Natural killer cell (primary cell): ENCODE measurements at regions of chr1 and their contacts with region 1.

Region 1: DNA sequence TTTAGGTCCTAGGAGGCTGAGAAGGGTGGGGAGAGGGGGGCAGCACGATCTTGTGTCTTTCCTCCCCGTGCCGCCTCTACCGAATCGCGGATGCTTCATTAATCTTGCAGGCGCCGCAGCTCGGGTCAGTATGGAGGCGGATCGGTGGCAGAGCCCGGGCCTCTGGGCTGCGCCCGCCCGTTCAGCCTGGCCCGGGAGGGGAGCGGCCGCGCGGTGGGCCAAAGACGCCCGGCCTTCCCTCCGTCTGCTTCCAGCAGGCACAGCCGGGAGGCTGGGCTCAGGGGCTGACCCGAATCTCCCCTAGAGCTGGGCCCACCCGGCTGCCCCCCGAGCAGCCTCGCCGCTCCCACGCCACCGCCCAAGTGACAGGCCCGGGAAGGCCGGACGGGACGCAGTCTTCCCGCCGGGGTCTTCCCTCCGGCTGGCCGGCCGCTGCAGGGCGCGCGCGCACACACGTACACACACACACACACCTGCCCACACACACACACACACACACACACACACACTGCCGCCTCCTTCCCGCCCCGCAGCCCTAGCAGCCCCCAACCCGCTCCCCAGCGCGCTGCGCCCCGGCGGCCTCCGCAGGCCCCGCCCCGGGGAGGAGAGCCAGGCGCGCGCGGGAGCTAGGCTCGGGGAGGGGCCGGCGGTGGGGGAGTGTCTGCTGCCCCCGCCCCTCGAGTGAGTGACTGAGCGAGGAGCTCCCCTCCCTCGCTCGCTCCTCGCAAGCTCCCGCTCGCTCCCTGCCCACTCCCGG is at the start of gene C1orf21:
- DNase-seq: peak; percentile 81 to 90
- ATAC-seq: peak; percentile 77 to 88 (median 79)
- H3K4me3 ChIP-seq: peak within 1 kb of the TSS; percentile 84
- H3K4me3 Mint-ChIP-seq: peak within 1 kb of the TSS; percentile 90
- H3K27ac ChIP-seq: peak within 1 kb of the TSS; percentile 93
- H3K27ac Mint-ChIP-seq: peak within 1 kb of the TSS; percentile 92 to 96
- H3K4me1 ChIP-seq: peaks cover 12% of the 10 kb centered on the region
- H3K4me1 Mint-ChIP-seq: peaks cover 55 to 58% of the 10 kb centered on the region in 2 donors
- H3K27me3 ChIP-seq: no peaks in the 10 kb centered on the region
- H3K27me3 Mint-ChIP-seq: no peaks in the 10 kb centered on the region
- CTCF ChIP-seq: no peak
- total RNA-seq, gene C1orf21: 84.3 to 111 (median 88.3) TPM

Region 2: GRCh38 chr1:183471743-183472487 is 914.6 kb before region 1 on chr1:
- intact Hi-C with region 1: loop called (anchors 2 kb)
- DNase-seq: peak; percentile 90 to 98
- ATAC-seq: peak; percentile 68 to 88 (median 74)
- H3K4me3 ChIP-seq: peak overlapping the region; percentile 80
- H3K4me3 Mint-ChIP-seq: peak overlapping the region; percentile 98
- H3K27ac ChIP-seq: peak overlapping the region; percentile 97
- H3K27ac Mint-ChIP-seq: peak overlapping the region; percentile 98 to 99
- H3K4me1 ChIP-seq: peaks cover 16% of the 10 kb centered on the region
- H3K4me1 Mint-ChIP-seq: peaks cover 23 to 35% of the 10 kb centered on the region in 2 donors
- H3K27me3 ChIP-seq: no peaks in the 10 kb centered on the region
- H3K27me3 Mint-ChIP-seq: peaks cover 0 to 7% of the 10 kb centered on the region in 2 donors
- CTCF ChIP-seq: no peak

Region 3: GRCh38 chr1:184051485-184052193 is 334.9 kb before region 1 on chr1 and contains the start of gene TSEN15:
- intact Hi-C with region 1: loop called (anchors 10 kb)
- DNase-seq: peak; percentile 62 to 86
- ATAC-seq: peak; percentile 95 to 97 (median 97)
- H3K4me3 ChIP-seq: peak within 1 kb of the TSS; percentile 94
- H3K4me3 Mint-ChIP-seq: peak within 1 kb of the TSS; percentile 98
- H3K27ac ChIP-seq: peak within 1 kb of the TSS; percentile 73
- H3K27ac Mint-ChIP-seq: peak within 1 kb of the TSS; percentile 90 to 93
- H3K4me1 ChIP-seq: no peaks in the 10 kb centered on the region
- H3K4me1 Mint-ChIP-seq: peaks cover 36 to 39% of the 10 kb centered on the region in 2 donors
- H3K27me3 ChIP-seq: peaks cover 6% of the 10 kb centered on the region
- H3K27me3 Mint-ChIP-seq: peaks cover 13 to 22% of the 10 kb centered on the region in 2 donors
- CTCF ChIP-seq: no peak
- total RNA-seq, gene TSEN15: 29.5 to 52.9 (median 34.3) TPM

Region 4: DNA sequence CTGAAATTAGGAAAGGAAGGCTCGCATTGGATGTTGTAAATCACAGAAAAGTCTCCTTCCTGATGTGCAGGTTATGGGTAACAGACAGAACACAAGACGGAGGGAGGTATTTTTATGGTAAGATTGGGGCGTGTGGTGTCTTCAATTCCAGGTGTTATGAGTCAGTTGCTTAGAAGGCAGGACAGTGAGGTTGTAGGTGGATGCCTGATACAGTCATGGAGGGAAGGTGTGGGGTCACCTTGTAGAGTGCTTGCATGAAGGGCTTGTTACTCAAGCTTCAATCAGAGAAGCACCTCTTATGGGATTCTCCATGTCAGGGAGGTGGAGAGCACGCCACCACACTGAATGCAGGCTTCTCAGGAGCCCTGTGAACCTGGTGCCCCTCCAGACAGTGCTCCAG is 63.4 kb after region 1 on chr1:
- intact Hi-C with region 1: loop called (anchors 5 kb)
- DNase-seq: no peak
- ATAC-seq: no peak
- H3K4me3 ChIP-seq: no peak overlapping the region
- H3K4me3 Mint-ChIP-seq: no peak overlapping the region
- H3K27ac ChIP-seq: no peak overlapping the region
- H3K27ac Mint-ChIP-seq: peak overlapping the region in 1 of 2 donors; percentile 32
- H3K4me1 ChIP-seq: peaks cover 9% of the 10 kb centered on the region
- H3K4me1 Mint-ChIP-seq: peaks cover 66 to 72% of the 10 kb centered on the region in 2 donors
- H3K27me3 ChIP-seq: no peaks in the 10 kb centered on the region
- H3K27me3 Mint-ChIP-seq: no peaks in the 10 kb centered on the region
- CTCF ChIP-seq: no peak

Region 5: DNA sequence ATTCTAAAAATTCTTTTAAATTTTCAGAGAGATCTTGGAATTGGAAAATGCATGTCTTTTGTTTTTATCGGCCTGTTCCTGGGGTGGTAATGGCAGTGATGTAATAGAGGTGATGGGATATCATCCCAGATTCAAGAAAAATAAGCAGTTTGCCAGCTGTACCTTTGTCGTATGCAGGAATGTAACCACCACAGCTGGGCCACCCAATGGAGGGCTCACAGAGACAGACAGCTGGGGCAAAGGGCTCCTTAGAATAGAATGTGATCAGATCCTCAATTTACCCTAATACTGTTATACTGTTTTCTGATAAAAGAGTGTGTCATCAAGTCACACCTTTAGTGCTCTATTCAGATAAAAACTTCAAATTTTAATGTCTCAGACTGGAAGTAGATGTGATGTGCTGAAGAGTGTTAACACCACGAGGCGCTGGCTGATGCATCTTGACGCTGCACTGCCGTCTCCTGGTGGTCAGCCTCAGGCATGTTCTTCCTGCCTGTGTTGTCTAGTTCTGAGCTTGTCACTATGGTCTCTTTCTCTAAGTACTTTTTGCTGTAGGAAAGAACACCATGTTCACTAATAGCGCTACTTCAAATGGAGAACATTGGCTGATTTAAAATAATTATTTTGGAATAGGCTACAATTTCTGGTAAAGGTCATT is 79.1 kb after region 1 on chr1:
- intact Hi-C with region 1: loop called (anchors 1 kb)
- DNase-seq: peak; percentile 36 to 45
- ATAC-seq: peak; percentile 93 to 99 (median 99)
- H3K4me3 ChIP-seq: no peak overlapping the region
- H3K4me3 Mint-ChIP-seq: no peak overlapping the region
- H3K27ac ChIP-seq: no peak overlapping the region
- H3K27ac Mint-ChIP-seq: peak overlapping the region; percentile 28 to 72
- H3K4me1 ChIP-seq: peaks cover 5% of the 10 kb centered on the region
- H3K4me1 Mint-ChIP-seq: peaks cover 71 to 72% of the 10 kb centered on the region in 2 donors
- H3K27me3 ChIP-seq: no peaks in the 10 kb centered on the region
- H3K27me3 Mint-ChIP-seq: no peaks in the 10 kb centered on the region
- CTCF ChIP-seq: peak; percentile 92

Region 6: GRCh38 chr1:184494929-184495328 is 108.4 kb after region 1 on chr1:
- intact Hi-C with region 1: loop called (anchors 1 kb)
- DNase-seq: no peak
- ATAC-seq: no peak
- H3K4me3 ChIP-seq: no peak overlapping the region
- H3K4me3 Mint-ChIP-seq: no peak overlapping the region
- H3K27ac ChIP-seq: no peak overlapping the region
- H3K27ac Mint-ChIP-seq: peak overlapping the region; percentile 98 to 99
- H3K4me1 ChIP-seq: peaks cover 17% of the 10 kb centered on the region
- H3K4me1 Mint-ChIP-seq: peaks cover 59 to 60% of the 10 kb centered on the region in 2 donors
- H3K27me3 ChIP-seq: no peaks in the 10 kb centered on the region
- H3K27me3 Mint-ChIP-seq: no peaks in the 10 kb centered on the region
- CTCF ChIP-seq: no peak

Region 7: DNA sequence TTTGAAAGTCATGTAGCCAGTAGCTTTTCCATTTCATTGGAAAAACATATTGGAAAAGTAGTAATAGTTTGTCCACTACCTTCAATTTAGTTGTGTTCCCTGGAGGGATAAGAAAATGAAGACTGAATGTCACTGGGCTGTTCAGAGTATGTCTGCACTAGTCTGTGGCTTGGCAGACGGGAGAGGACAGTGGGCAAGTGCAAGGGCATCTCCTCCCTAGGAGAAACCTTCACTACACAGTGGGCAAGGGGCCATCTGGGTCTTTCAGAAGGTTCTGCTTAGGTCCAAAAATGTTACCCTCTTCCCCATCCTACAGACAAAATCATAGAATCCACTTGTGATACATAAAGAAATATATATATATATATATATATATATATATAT is 118.5 kb after region 1 on chr1:
- intact Hi-C with region 1: no loop called
- DNase-seq: no peak
- ATAC-seq: no peak
- H3K4me3 ChIP-seq: no peak overlapping the region
- H3K4me3 Mint-ChIP-seq: no peak overlapping the region
- H3K27ac ChIP-seq: no peak overlapping the region
- H3K27ac Mint-ChIP-seq: peak overlapping the region in 1 of 2 donors; percentile 35
- H3K4me1 ChIP-seq: no peaks in the 10 kb centered on the region
- H3K4me1 Mint-ChIP-seq: peaks cover 36 to 37% of the 10 kb centered on the region in 2 donors
- H3K27me3 ChIP-seq: no peaks in the 10 kb centered on the region
- H3K27me3 Mint-ChIP-seq: no peaks in the 10 kb centered on the region
- CTCF ChIP-seq: no peak

Region 8: DNA sequence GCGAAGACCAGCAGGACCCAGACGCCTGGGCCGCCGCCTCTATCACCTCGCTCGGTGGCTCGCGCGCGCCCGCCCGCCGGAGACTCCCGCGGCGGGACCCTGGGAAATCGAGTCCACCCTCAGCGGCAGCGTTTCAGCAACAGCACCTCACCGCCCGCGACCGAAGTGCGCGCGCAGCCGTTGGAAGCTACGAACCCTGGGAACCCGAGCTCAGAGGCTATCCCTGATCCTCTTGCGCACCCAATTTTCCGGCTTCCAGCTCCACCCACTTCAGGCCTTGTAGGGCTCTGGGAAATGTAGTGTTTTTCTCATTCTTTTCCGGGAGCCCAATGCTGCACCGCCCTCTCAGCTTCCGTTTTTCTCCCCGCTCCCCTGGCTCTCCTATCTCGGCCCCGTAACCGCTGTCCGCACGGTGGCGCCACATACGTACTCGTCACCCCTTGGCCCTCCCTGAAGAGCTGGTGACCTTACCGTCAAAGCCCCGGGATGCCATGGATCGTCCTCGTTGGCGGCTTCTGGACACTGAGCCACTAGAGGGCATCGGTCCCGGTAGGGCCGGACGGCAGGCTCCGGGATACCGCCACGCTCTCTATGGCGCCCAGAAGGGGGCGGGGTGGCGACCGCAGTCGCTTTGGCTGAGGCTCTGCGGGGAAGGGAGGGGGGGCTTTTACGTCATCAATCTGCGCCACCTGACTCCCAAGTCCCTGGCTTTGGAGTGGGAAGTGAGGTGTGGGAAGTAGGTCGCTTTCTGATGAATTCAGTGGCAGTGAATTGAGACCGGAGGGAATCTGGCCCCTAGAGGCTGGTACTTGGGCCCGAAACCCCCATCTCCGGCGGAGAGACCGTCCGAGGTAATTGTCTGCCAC is 1988.8 kb after region 1 on chr1 and contains the starts of genes ODR4 and TPR:
- intact Hi-C with region 1: loop called (anchors 10 kb)
- DNase-seq: peak; percentile 92 to 98
- ATAC-seq: peak; percentile 77 to 90 (median 81)
- H3K4me3 ChIP-seq: peak within 1 kb of the TSS; percentile 94
- H3K4me3 Mint-ChIP-seq: peak within 1 kb of the TSS; percentile 91
- H3K27ac ChIP-seq: peak within 1 kb of the TSS; percentile 94
- H3K27ac Mint-ChIP-seq: peak within 1 kb of the TSS; percentile 90
- H3K4me1 ChIP-seq: peaks cover 10% of the 10 kb centered on the region
- H3K4me1 Mint-ChIP-seq: peaks cover 33 to 37% of the 10 kb centered on the region in 2 donors
- H3K27me3 ChIP-seq: no peaks in the 10 kb centered on the region
- H3K27me3 Mint-ChIP-seq: no peaks in the 10 kb centered on the region
- CTCF ChIP-seq: peak; percentile 85
- total RNA-seq, gene ODR4: 20.3 to 24.4 (median 21.0) TPM
- total RNA-seq, gene TPR: 96.8 to 137 (median 116) TPM